ENCODE measurements at regions of chr15 and their contacts with region 1.

Region 1: DNA sequence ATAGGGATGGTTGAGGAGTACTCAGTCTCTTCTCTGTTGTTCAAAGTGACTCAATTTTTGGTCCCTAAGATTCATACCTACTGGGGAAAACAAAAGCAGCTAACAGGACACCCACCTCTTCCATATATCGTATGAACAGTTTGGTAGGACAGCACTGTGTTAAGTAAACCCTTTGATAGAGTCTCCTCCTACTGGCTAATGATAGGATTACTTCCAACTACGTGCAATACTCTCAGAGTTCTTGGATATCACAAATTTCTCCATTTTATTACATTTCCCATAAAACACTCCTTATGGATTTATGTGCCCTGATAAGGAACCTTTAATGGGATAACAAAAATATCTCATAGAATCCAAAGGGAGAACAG is 200.2 kb upstream of the GOLGA6L4 start:
- DNase-seq: no peak
- H3K4me3 ChIP-seq: no peak overlapping the region
- H3K27ac ChIP-seq: no peak overlapping the region
- H3K4me1 ChIP-seq: peaks cover 1% of the 10 kb centered on the region
- H3K27me3 ChIP-seq: no peaks in the 10 kb centered on the region
- CTCF ChIP-seq: peak in 2 of 3 donors; percentile 9 to 44
- EP300 ChIP-seq: no peak
- POLR2A ChIP-seq: no peak

Region 2: DNA sequence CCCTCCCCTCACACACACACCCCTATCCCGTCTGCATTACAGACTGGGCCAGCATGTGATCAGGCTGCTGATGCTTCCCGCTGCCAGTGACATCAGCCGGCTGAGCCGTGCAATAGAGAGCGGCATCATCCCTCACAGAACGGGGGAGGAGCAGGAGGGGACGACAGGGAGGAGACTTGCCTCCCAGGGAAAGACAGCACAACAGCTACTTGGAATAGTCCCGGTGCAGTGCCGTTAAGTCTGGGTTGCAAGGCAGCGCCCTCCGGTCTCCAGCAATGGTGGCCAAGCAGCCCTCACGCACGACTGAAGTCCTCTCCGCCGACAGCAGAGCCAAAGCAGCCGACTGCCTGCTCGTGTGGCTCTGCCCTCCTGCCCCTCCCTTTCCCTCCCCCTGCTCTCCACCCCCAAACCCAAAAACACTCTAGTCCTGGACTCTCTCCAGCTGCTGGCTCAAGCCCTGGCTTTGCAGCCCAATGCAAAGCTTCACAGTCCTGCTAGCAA is 1463.6 kb before region 1 on chr15:
- intact Hi-C with region 1: no loop called
- DNase-seq: peak; percentile 71 to 76 (median 74)
- H3K4me3 ChIP-seq: peak overlapping the region; percentile 39
- H3K27ac ChIP-seq: peak overlapping the region in 1 of 2 donors; percentile 69
- H3K4me1 ChIP-seq: peaks cover 3% of the 10 kb centered on the region
- H3K27me3 ChIP-seq: no peaks in the 10 kb centered on the region
- CTCF ChIP-seq: no peak
- EP300 ChIP-seq: no peak
- POLR2A ChIP-seq: peak; percentile 22

Region 3: GRCh38 chr15:83446904-83447709 is 588.3 kb before region 1 on chr15 and contains the start of gene SH3GL3:
- intact Hi-C with region 1: loop called in 1 of 4 experiments (anchors 10 kb)
- DNase-seq: peak; percentile 49 to 76 (median 68)
- H3K4me3 ChIP-seq: peak within 1 kb of the TSS; percentile 39
- H3K27ac ChIP-seq: no peak within 1 kb of the TSS
- H3K4me1 ChIP-seq: peaks cover 3% of the 10 kb centered on the region
- H3K27me3 ChIP-seq: no peaks in the 10 kb centered on the region
- CTCF ChIP-seq: no peak
- EP300 ChIP-seq: no peak
- POLR2A ChIP-seq: no peak
- total RNA-seq, gene SH3GL3: 0.25 to 1.7 (median 0.51) TPM in 6 of 7 donors, not detected in the other

Region 4: DNA sequence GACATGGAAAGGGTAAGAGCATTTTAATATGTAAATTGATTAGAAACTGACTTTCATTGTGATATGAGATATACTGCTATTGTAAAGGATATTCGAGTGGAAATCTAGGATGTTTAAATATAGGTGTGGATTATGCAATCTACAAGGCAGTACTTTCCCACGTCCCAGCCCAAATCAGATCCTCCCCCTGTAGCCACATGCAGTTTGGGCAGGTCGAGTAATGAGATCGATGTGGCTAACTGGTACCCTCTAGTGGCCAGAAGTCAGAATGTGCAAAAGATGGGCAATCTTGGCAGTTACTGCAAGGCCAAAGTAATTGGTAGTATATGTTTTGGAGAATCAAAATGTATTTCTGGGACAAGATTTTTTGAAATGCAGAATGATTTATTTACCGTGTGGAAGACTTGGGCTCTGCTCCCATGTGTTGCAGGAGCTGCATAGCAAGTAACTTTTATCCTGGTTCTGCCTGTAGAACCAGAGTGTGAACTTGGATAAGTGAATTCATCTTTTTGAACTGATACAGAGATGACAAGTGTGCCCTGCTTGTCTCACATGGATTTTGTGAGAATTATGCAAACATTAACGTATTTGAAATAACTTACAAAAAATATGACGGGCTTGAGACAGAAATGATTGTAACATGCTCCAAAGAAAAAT is 475.9 kb before region 1 on chr15:
- intact Hi-C with region 1: loop called in 1 of 4 experiments (anchors 10 kb)
- DNase-seq: peak in 3 of 5 donors; percentile 28 to 46 (median 32)
- H3K4me3 ChIP-seq: no peak overlapping the region
- H3K27ac ChIP-seq: no peak overlapping the region
- H3K4me1 ChIP-seq: no peaks in the 10 kb centered on the region
- H3K27me3 ChIP-seq: no peaks in the 10 kb centered on the region
- CTCF ChIP-seq: peak; percentile 41 to 49 (median 48)
- EP300 ChIP-seq: no peak
- POLR2A ChIP-seq: no peak

Region 5: GRCh38 chr15:83571820-83572707 is 463.3 kb before region 1 on chr15:
- intact Hi-C with region 1: loop called in 2 of 4 experiments (anchors 5 to 10 kb)
- DNase-seq: no peak
- H3K4me3 ChIP-seq: no peak overlapping the region
- H3K27ac ChIP-seq: no peak overlapping the region
- H3K4me1 ChIP-seq: no peaks in the 10 kb centered on the region
- H3K27me3 ChIP-seq: no peaks in the 10 kb centered on the region
- CTCF ChIP-seq: peak; percentile 10 to 36 (median 13)
- EP300 ChIP-seq: no peak
- POLR2A ChIP-seq: no peak

Region 6: GRCh38 chr15:84057714-84058331 is 22.4 kb after region 1 on chr15:
- intact Hi-C with region 1: no loop called
- DNase-seq: no peak
- H3K4me3 ChIP-seq: no peak overlapping the region
- H3K27ac ChIP-seq: no peak overlapping the region
- H3K4me1 ChIP-seq: no peaks in the 10 kb centered on the region
- H3K27me3 ChIP-seq: no peaks in the 10 kb centered on the region
- CTCF ChIP-seq: no peak
- EP300 ChIP-seq: no peak
- POLR2A ChIP-seq: no peak